ENCODE measurements at regions of chr6 and their contacts with region 1.

Region 1: DNA sequence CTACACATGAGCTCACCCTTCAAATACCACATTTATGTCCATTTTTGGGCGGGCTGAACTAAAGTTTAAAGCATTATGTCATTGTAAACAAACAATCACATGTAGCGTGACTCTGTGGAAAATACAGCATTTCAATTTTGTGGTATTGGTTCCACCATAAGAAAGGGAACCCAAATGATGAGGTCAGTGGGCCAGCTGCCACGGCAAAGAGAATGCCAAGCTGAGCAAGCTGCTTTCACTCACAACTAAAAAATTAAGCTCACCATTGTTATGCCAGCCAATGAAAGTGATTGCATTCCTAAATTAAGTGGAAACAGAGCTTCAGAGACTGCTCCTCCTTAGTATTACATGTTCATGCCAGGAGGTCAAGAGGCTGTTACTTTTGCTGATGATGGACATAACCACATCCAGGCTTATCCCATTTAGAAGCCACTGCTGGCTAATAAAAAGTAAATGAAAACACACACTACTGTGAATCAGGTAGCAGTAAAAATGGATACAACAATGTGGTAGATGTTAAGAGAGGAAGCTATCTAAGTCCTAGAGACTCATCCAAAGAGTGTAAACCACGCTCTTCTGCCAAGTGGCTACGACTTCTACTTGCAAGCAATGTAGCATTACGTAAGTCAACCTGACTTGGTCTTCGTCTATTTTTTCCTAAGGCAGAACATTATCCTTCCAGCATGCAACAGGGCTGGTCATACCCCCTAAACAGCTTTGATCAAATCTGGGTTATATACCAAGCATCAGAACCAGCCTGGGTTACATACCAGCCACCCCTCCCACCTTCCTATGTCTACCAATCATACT is 164.8 kb downstream of the BACH2 start:
- DNase-seq: no peak
- ATAC-seq: no peak
- H3K4me3 ChIP-seq: no peak overlapping the region
- H3K4me3 Mint-ChIP-seq: peak overlapping the region in 2 of 10 donors; percentile 14 to 32
- H3K27ac ChIP-seq: no peak overlapping the region
- H3K27ac Mint-ChIP-seq: peak overlapping the region in 8 of 9 donors; percentile 8 to 88 (median 79)
- H3K4me1 ChIP-seq: peaks cover 0 to 40% of the 10 kb centered on the region in 2 donors
- H3K4me1 Mint-ChIP-seq: peaks cover 39 to 85% (median 78%) of the 10 kb centered on the region in 7 donors
- H3K27me3 ChIP-seq: no peaks in the 10 kb centered on the region
- H3K27me3 Mint-ChIP-seq: no peaks in the 10 kb centered on the region

Region 2: GRCh38 chr6:89610149-89610642 is 521.6 kb before region 1 on chr6:
- CTCF ChIA-PET with region 1: no interaction called
- POLR2A ChIA-PET with region 1: no interaction called
- intact Hi-C with region 1: no loop called
- DNase-seq: peak; percentile 34 to 75 (median 65)
- ATAC-seq: peak; percentile 91
- H3K4me3 ChIP-seq: no peak overlapping the region
- H3K4me3 Mint-ChIP-seq: no peak overlapping the region
- H3K27ac ChIP-seq: no peak overlapping the region
- H3K27ac Mint-ChIP-seq: no peak overlapping the region
- H3K4me1 ChIP-seq: no peaks in the 10 kb centered on the region
- H3K4me1 Mint-ChIP-seq: peaks cover 0 to 17% (median 0%) of the 10 kb centered on the region in 7 donors
- H3K27me3 ChIP-seq: no peaks in the 10 kb centered on the region
- H3K27me3 Mint-ChIP-seq: no peaks in the 10 kb centered on the region

Region 3: GRCh38 chr6:90110971-90111370 is 20.8 kb before region 1 on chr6:
- CTCF ChIA-PET with region 1: no interaction called
- POLR2A ChIA-PET with region 1: interaction called, 10 read pairs
- intact Hi-C with region 1: no loop called
- DNase-seq: peak in 8 of 9 donors; percentile 51 to 78 (median 64)
- ATAC-seq: peak; percentile 84
- H3K4me3 ChIP-seq: no peak overlapping the region
- H3K4me3 Mint-ChIP-seq: peak overlapping the region; percentile 35 to 81 (median 58)
- H3K27ac ChIP-seq: peak overlapping the region; percentile 56
- H3K27ac Mint-ChIP-seq: peak overlapping the region; percentile 73 to 92 (median 82)
- H3K4me1 ChIP-seq: peaks cover 26 to 57% of the 10 kb centered on the region in 2 donors
- H3K4me1 Mint-ChIP-seq: peaks cover 36 to 97% (median 90%) of the 10 kb centered on the region in 7 donors
- H3K27me3 ChIP-seq: no peaks in the 10 kb centered on the region
- H3K27me3 Mint-ChIP-seq: no peaks in the 10 kb centered on the region

Region 4: DNA sequence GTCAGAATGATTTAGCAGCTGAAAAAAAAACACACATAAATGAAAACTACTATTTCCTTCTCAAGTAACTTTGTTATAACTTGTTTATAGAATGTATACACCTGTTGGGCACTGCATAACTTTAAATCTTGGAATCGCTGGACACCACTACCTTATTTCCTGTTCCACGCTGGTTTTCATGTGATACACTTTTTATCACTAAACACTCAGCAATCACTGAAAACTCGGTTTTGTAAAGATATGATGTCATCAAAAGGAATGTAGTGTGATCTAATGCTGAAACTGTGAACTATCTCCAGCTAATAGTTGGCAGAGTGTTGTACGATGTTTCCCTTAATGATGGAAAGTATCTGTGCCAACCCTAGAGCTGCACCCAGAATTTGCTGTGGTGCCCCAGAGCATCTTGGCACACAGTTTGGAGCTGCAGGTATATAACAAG is 36.9 kb after region 1 on chr6:
- CTCF ChIA-PET with region 1: no interaction called
- POLR2A ChIA-PET with region 1: no interaction called
- intact Hi-C with region 1: loop called in 1 of 2 experiments (anchors 2 kb)
- DNase-seq: no peak
- ATAC-seq: no peak
- H3K4me3 ChIP-seq: no peak overlapping the region
- H3K4me3 Mint-ChIP-seq: peak overlapping the region in 2 of 10 donors; percentile 40 to 45
- H3K27ac ChIP-seq: no peak overlapping the region
- H3K27ac Mint-ChIP-seq: peak overlapping the region in 4 of 9 donors; percentile 14 to 62 (median 40)
- H3K4me1 ChIP-seq: peaks cover 0 to 27% of the 10 kb centered on the region in 2 donors
- H3K4me1 Mint-ChIP-seq: peaks cover 11 to 86% (median 75%) of the 10 kb centered on the region in 7 donors
- H3K27me3 ChIP-seq: no peaks in the 10 kb centered on the region
- H3K27me3 Mint-ChIP-seq: no peaks in the 10 kb centered on the region